ENCODE measurements at regions of chr3 and their contacts with region 1.

Region 1: GRCh38 chr3:56339671-56340070 is 128.6 kb downstream of the ERC2 start:
- DNase-seq: no peak
- ATAC-seq: no peak
- H3K4me3 Mint-ChIP-seq: no peak overlapping the region
- H3K27ac Mint-ChIP-seq: no peak overlapping the region
- H3K4me1 Mint-ChIP-seq: peaks cover 5% of the 10 kb centered on the region
- H3K27me3 Mint-ChIP-seq: no peaks in the 10 kb centered on the region
- CTCF ChIP-seq: no peak

Region 2: DNA sequence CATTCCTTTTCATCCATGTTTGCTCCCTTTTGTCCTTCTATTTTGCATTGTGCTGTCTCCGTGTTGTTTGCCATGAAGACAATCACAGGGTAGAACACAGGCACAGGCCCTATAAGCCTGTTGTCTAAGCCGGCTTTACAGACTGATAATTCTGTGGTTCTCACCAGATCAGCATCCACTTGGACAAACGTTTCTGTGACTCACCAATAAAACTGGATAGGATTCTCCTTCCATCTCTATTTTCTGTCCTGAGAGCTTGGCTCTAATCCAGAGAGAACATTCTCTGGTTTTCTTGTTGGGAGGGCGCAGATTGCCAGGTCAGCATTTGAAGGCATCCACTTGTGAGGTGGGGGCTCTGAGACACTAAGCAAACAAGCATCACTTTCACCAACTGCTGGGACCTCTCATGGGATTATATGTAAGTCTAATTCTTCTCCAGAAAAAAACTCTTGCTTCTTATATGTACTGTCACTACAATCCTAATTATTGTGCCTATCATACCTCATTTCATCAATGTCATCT is 27.0 kb after region 1 on chr3:
- CTCF ChIA-PET with region 1: no interaction called
- POLR2A ChIA-PET with region 1: no interaction called
- DNase-seq: no peak
- ATAC-seq: no peak
- H3K4me3 Mint-ChIP-seq: no peak overlapping the region
- H3K27ac Mint-ChIP-seq: peak overlapping the region; percentile 29
- H3K4me1 Mint-ChIP-seq: peaks cover 26% of the 10 kb centered on the region
- H3K27me3 Mint-ChIP-seq: no peaks in the 10 kb centered on the region
- CTCF ChIP-seq: no peak

Region 3: DNA sequence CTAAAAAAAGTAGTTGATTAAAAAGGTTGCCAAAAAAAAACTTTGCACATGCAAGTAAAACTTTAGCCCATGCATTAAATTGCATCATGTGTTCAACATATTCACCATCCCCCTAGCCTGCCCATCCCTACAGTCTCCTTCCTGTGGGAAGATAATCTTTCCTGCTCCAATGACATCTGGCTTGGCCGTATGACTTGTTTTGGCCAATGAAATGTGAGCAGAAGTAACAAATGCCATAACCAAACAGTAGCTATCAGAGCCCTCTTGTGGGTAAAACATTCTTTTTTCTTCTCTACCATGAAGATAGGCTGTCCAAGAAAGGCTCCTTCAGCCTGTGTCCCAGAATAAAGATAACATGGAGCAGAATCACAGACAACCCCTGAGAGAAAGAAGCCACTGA is 113.3 kb after region 1 on chr3:
- CTCF ChIA-PET with region 1: interaction called, 18 read pairs
- POLR2A ChIA-PET with region 1: interaction called, 7 read pairs
- DNase-seq: no peak
- ATAC-seq: peak; percentile 74
- H3K4me3 Mint-ChIP-seq: no peak overlapping the region
- H3K27ac Mint-ChIP-seq: no peak overlapping the region
- H3K4me1 Mint-ChIP-seq: peaks cover 29% of the 10 kb centered on the region
- H3K27me3 Mint-ChIP-seq: no peaks in the 10 kb centered on the region; the same call in 1 of the 2 replicates
- CTCF ChIP-seq: no peak